K562 (cell line): ENCODE measurements at regions of chr18 and their contacts with region 1.

Region 1: GRCh38 chr18:49858309-49859020 is 45.1 kb upstream of the ACAA2 start:
- DNase-seq: peak; percentile 61 to 71 (median 66)
- ATAC-seq: peak; percentile 83
- H3K4me3 ChIP-seq: no peak overlapping the region
- H3K27ac ChIP-seq: no peak overlapping the region
- H3K4me1 ChIP-seq: no peaks in the 10 kb centered on the region; a peak in 1 of 5 replicates
- H3K27me3 ChIP-seq: peaks cover 0 to 18% of the 10 kb centered on the region in 2 experiments; a peak in 2 of 5 replicates
- CTCF ChIP-seq: peak; percentile 77 to 87 (median 81)
- EP300 ChIP-seq: no peak
- POLR2A ChIP-seq: no peak
- RAD21 ChIP-seq: peak; percentile 87 to 88

Region 2: DNA sequence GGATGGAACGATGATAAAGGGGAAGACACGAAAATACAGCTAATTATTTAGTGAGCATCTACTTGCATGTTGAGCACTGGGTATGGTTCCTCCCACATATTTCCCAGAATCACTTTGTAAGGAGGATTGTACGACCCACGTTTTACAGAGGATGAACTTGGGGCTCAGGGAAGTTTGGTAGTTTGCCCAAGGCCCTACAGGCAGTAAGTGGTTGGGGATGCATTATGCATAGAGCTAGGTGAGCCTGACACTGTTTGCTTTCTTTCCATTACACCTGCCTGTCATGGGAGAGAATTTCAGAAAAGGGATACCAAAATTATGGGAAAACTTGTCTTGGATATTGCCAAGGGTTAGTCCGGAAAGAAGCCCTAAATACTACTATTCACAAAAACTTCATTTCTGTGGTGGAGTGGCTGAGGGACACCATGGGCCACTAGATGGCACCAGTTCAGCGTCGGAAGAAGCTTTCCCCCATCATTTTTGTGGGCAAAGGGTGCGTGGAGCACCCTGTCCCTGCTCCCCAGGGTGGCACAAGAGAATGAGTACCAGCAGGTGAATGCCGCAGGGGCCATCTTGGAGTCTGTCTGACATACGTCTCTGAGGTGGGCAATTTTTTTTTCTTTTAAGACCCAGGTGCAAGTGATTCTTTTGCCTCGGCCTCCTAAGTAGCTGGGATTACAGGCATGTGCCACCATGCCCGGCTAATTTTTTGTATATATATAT is 347.9 kb before region 1 on chr18:
- CTCF ChIA-PET with region 1: interaction called, 15 read pairs
- POLR2A ChIA-PET with region 1: no interaction called
- in situ Hi-C with region 1: loop called (anchors 5 kb)
- intact Hi-C with region 1: loop called (anchors 1 kb)
- DNase-seq: peak; percentile 39 to 53 (median 43)
- ATAC-seq: peak; percentile 84
- H3K4me3 ChIP-seq: no peak overlapping the region
- H3K27ac ChIP-seq: no peak overlapping the region
- H3K4me1 ChIP-seq: peaks cover 0 to 4% of the 10 kb centered on the region in 2 experiments; a peak in 3 of 5 replicates
- H3K27me3 ChIP-seq: peaks cover 2 to 4% of the 10 kb centered on the region in 2 experiments; a peak in 2 of 5 replicates
- CTCF ChIP-seq: peak; percentile 71 to 79 (median 73)
- EP300 ChIP-seq: no peak
- POLR2A ChIP-seq: no peak
- RAD21 ChIP-seq: peak; percentile 77 to 84

Region 3: GRCh38 chr18:49550621-49551339 is 307.7 kb before region 1 on chr18:
- CTCF ChIA-PET with region 1: no interaction called
- POLR2A ChIA-PET with region 1: no interaction called
- in situ Hi-C with region 1: no loop called
- intact Hi-C with region 1: no loop called
- DNase-seq: no peak
- ATAC-seq: no peak
- H3K4me3 ChIP-seq: no peak overlapping the region
- H3K27ac ChIP-seq: no peak overlapping the region
- H3K4me1 ChIP-seq: no peaks in the 10 kb centered on the region
- H3K27me3 ChIP-seq: peaks cover 0 to 2% of the 10 kb centered on the region in 2 experiments; a peak in 1 of 5 replicates
- CTCF ChIP-seq: no peak
- EP300 ChIP-seq: no peak
- POLR2A ChIP-seq: no peak
- RAD21 ChIP-seq: no peak

Region 4: DNA sequence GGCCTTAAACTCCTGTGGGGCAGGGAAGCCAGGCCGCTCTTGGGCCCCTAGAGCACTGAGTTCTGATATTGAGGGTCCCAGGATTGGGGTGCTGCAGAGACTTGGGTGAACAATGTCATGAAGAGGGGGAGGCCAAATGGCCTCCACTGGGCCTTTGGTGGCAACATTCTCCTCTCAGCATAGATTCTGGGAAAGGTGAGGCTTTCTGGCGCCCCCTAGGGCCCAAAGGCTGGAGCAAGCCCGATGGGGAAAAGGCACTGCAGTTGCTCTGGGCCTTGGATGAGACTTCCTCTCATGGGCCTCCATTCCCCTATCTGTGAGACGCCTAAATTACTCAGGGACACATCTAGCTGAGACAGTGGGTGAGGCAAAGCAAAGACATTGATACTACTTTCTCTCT is 129.9 kb before region 1 on chr18:
- CTCF ChIA-PET with region 1: no interaction called
- POLR2A ChIA-PET with region 1: no interaction called
- in situ Hi-C with region 1: no loop called
- intact Hi-C with region 1: loop called (anchors 10 kb)
- DNase-seq: peak; percentile 37 to 65 (median 44)
- ATAC-seq: peak; percentile 90
- H3K4me3 ChIP-seq: no peak overlapping the region
- H3K27ac ChIP-seq: no peak overlapping the region
- H3K4me1 ChIP-seq: peaks cover 0 to 10% of the 10 kb centered on the region in 2 experiments; a peak in 4 of 5 replicates
- H3K27me3 ChIP-seq: no peaks in the 10 kb centered on the region; a peak in 2 of 5 replicates
- CTCF ChIP-seq: peak; percentile 64 to 71 (median 68)
- EP300 ChIP-seq: no peak
- POLR2A ChIP-seq: no peak
- RAD21 ChIP-seq: peak; percentile 54 to 70

Region 5: GRCh38 chr18:50203801-50204604 is 345.5 kb after region 1 on chr18:
- CTCF ChIA-PET with region 1: no interaction called
- POLR2A ChIA-PET with region 1: no interaction called
- in situ Hi-C with region 1: no loop called
- intact Hi-C with region 1: loop called (anchors 10 kb)
- DNase-seq: peak; percentile 9 to 60 (median 24)
- ATAC-seq: peak; percentile 84
- H3K4me3 ChIP-seq: no peak overlapping the region
- H3K27ac ChIP-seq: no peak overlapping the region
- H3K4me1 ChIP-seq: no peaks in the 10 kb centered on the region; a peak in 1 of 5 replicates
- H3K27me3 ChIP-seq: peaks cover 4 to 12% of the 10 kb centered on the region in 2 experiments; a peak in 3 of 5 replicates
- CTCF ChIP-seq: peak; percentile 53 to 64 (median 62)
- EP300 ChIP-seq: no peak
- POLR2A ChIP-seq: no peak
- RAD21 ChIP-seq: peak; percentile 28 to 65; a peak in 3 of 4 replicates

Region 6: DNA sequence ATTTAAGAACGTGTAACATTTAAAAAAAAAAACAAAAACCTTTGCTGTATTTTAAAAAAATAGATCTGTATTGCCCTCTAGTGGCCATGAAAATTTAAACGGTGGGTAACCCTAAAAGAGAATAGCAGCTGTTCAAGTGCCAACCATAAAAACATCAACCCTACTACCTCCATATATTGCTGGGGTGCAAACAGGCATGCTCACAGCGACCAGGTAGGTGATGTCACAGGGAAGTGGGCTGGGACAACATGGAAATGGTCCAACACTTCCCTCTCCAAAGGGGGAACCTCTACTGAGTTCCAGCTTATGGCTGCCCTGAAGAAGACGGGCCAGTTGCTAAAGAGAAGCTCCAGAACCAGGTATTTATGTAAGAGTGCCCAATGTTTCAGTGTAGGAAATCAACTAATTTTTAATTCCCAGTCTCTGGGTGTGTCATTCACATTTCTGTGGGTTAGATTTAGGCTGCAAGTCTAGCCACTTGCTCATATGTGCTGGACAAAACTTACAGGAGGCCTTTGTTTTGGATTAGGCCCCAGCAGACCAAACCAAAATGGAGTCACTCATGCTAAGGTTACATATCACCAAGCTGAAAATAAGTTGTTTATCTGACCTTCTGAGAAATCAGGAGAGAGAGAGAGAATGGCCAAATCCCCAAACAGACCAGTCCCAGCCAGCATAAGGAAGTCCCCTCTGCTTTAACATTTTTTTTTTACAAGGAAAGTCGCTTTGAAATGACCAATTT is 570.9 kb after region 1 on chr18:
- CTCF ChIA-PET with region 1: no interaction called
- POLR2A ChIA-PET with region 1: no interaction called
- in situ Hi-C with region 1: no loop called
- intact Hi-C with region 1: loop called (anchors 5 kb)
- DNase-seq: peak; percentile 14 to 45 (median 19)
- ATAC-seq: 0 out of 3 replicates have a peak, but pooled peaks have one; percentile 19
- H3K4me3 ChIP-seq: no peak overlapping the region
- H3K27ac ChIP-seq: no peak overlapping the region
- H3K4me1 ChIP-seq: peaks cover 0 to 16% of the 10 kb centered on the region in 2 experiments; a peak in 3 of 5 replicates
- H3K27me3 ChIP-seq: no peaks in the 10 kb centered on the region; a peak in 1 of 5 replicates
- CTCF ChIP-seq: peak; percentile 11 to 50 (median 41); a peak in 5 of 6 replicates
- EP300 ChIP-seq: no peak
- POLR2A ChIP-seq: no peak
- RAD21 ChIP-seq: peak; percentile 27 to 44; a peak in 1 of 4 replicates